Calu3 (cell line): ENCODE measurements at regions of chr3 and their contacts with region 1.

Region 1: GRCh38 chr3:59688636-59689035 is 638.8 kb upstream of the CFAP20DC start:
- DNase-seq: no peak
- H3K4me3 Mint-ChIP-seq: no peak overlapping the region
- H3K27ac Mint-ChIP-seq: no peak overlapping the region
- H3K4me1 Mint-ChIP-seq: no peaks in the 10 kb centered on the region
- H3K27me3 Mint-ChIP-seq: no peaks in the 10 kb centered on the region
- CTCF ChIP-seq: no peak

Region 2: GRCh38 chr3:59595830-59596229 is 92.8 kb before region 1 on chr3:
- CTCF ChIA-PET with region 1: no interaction called
- intact Hi-C with region 1: no loop called
- DNase-seq: no peak
- H3K4me3 Mint-ChIP-seq: no peak overlapping the region
- H3K27ac Mint-ChIP-seq: no peak overlapping the region
- H3K4me1 Mint-ChIP-seq: no peaks in the 10 kb centered on the region
- H3K27me3 Mint-ChIP-seq: peaks cover 12% of the 10 kb centered on the region
- CTCF ChIP-seq: no peak

Region 3: DNA sequence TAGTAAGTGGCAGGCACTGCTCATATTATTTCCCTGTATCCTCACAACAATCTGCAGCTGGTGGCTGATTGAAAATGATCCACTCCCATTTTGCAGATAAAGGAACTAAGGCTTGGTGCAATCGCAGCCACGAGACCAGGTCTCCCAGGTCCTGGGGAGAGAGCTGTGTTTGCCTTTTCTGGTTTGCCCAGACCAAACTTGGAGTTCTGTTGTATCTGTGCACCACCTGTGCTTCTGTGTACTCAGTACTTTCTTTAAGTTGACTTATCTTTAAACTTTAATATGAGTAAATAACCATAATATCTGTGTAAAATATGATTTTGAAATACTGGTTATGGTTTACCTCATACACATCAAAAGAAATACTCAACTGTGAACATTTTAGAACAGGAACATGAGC is 13.1 kb before region 1 on chr3:
- CTCF ChIA-PET with region 1: interaction called, 12 read pairs
- intact Hi-C with region 1: no loop called
- DNase-seq: no peak
- H3K4me3 Mint-ChIP-seq: no peak overlapping the region
- H3K27ac Mint-ChIP-seq: no peak overlapping the region
- H3K4me1 Mint-ChIP-seq: no peaks in the 10 kb centered on the region
- H3K27me3 Mint-ChIP-seq: no peaks in the 10 kb centered on the region
- CTCF ChIP-seq: no peak

Region 4: DNA sequence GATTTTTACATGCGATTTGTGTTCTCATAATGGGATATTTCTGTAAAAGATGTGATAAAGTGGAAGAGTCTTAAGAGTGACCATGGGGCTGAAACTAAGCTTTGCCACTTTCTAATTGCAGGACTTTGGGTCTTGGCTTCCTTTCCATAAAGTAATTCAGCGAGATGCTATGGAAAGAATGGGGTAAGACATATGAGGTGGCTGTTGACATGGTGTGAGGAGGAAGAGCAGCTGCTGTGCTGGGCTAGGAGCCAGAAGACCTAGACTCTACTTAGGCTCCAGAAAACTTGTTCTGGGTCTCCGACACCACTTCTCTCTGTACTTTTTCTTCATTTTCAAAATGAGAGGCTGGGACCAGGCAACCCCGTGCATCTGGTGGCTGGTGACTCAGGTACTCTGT is 15.7 kb after region 1 on chr3:
- CTCF ChIA-PET with region 1: no interaction called
- intact Hi-C with region 1: no loop called
- DNase-seq: no peak
- H3K4me3 Mint-ChIP-seq: no peak overlapping the region
- H3K27ac Mint-ChIP-seq: no peak overlapping the region
- H3K4me1 Mint-ChIP-seq: no peaks in the 10 kb centered on the region
- H3K27me3 Mint-ChIP-seq: no peaks in the 10 kb centered on the region
- CTCF ChIP-seq: no peak

Region 5: GRCh38 chr3:59919586-59919985 is 230.9 kb after region 1 on chr3:
- CTCF ChIA-PET with region 1: no interaction called
- intact Hi-C with region 1: no loop called
- DNase-seq: no peak
- H3K4me3 Mint-ChIP-seq: no peak overlapping the region
- H3K27ac Mint-ChIP-seq: no peak overlapping the region
- H3K4me1 Mint-ChIP-seq: no peaks in the 10 kb centered on the region
- H3K27me3 Mint-ChIP-seq: no peaks in the 10 kb centered on the region
- CTCF ChIP-seq: no peak